HepG2 (cell line): ENCODE measurements at regions of chr9 and their contacts with region 1.

Region 1: GRCh38 chr9:21802195-21803000 is at the start of gene MTAP:
- DNase-seq: peak; percentile 88
- ATAC-seq: peak; percentile 99
- H3K4me3 ChIP-seq: peak within 1 kb of the TSS; percentile 64 to 83 (median 82)
- H3K27ac ChIP-seq: peak within 1 kb of the TSS; percentile 85
- H3K4me1 ChIP-seq: peaks cover 35% of the 10 kb centered on the region
- H3K27me3 ChIP-seq: no peaks in the 10 kb centered on the region; a peak in 1 of 5 replicates
- CTCF ChIP-seq: no peak
- EP300 ChIP-seq: no peak
- POLR2A ChIP-seq: peak; percentile 93 to 99
- RAD21 ChIP-seq: no peak
- total RNA-seq, gene MTAP: 51.2 and 74.1 TPM in 2 replicates

Region 2: DNA sequence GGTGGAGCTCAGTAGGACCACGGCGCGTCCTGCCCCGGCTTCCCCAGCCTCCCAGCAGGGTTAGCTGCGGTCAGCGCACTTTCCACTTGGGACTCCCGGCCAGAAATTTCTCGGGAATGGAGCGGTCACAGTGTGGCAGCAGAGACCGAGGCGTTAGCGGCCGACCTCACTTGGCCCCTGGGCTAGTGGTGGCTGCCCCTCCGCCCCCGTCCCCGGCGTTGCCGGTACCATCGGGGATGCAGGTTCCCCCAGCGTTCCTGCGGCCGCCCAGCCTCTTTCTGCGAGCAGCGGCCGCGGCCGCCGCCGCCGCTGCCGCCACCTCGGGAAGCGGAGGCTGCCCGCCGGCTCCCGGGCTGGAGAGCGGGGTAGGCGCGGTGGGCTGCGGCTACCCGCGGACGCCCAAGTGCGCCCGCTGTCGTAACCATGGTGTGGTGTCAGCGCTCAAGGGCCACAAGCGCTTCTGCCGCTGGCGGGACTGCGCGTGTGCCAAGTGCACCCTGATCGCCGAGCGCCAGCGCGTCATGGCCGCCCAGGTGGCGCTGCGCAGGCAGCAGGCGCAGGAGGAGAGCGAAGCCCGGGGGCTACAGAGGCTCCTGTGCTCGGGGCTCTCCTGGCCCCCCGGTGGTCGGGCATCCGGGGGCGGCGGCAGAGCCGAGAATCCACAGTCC is 644.7 kb after region 1 on chr9:
- CTCF ChIA-PET with region 1: no interaction called
- POLR2A ChIA-PET with region 1: no interaction called
- in situ Hi-C with region 1: loop called (anchors 25 kb)
- intact Hi-C with region 1: no loop called
- DNase-seq: no peak
- ATAC-seq: peak; percentile 93
- H3K4me3 ChIP-seq: peak overlapping the region; percentile 30 to 66 (median 32); a peak in 5 of 6 replicates
- H3K27ac ChIP-seq: no peak overlapping the region
- H3K4me1 ChIP-seq: no peaks in the 10 kb centered on the region
- H3K27me3 ChIP-seq: peaks cover 2 to 20% of the 10 kb centered on the region in 2 experiments; a peak in 4 of 5 replicates
- CTCF ChIP-seq: peak; percentile 28
- EP300 ChIP-seq: no peak
- POLR2A ChIP-seq: no peak
- RAD21 ChIP-seq: no peak